Activated CD8-positive, alpha-beta T cell treated with anti-CD3 and anti-CD28 coated beads for 36 hours (primary cell): ENCODE measurements at regions of chr6 and their contacts with region 1.

Region 1: GRCh38 chr6:112180095-112180820 is 74.1 kb downstream of the LAMA4 start:
- DNase-seq: peak; percentile 56
- ATAC-seq: peak; percentile 83
- H3K4me3 Mint-ChIP-seq: no peak overlapping the region
- H3K27ac Mint-ChIP-seq: no peak overlapping the region
- H3K4me1 Mint-ChIP-seq: no peaks in the 10 kb centered on the region
- H3K27me3 Mint-ChIP-seq: peaks cover 14% of the 10 kb centered on the region
- CTCF ChIP-seq: peak; percentile 91

Region 2: GRCh38 chr6:111750753-111751684 is 429.2 kb before region 1 on chr6:
- CTCF ChIA-PET with region 1: no interaction called
- POLR2A ChIA-PET with region 1: no interaction called
- intact Hi-C with region 1: no loop called
- DNase-seq: peak; percentile 75
- ATAC-seq: peak; percentile 85
- H3K4me3 Mint-ChIP-seq: peak overlapping the region; percentile 35
- H3K27ac Mint-ChIP-seq: peak overlapping the region; percentile 96
- H3K4me1 Mint-ChIP-seq: peaks cover 93% of the 10 kb centered on the region
- H3K27me3 Mint-ChIP-seq: no peaks in the 10 kb centered on the region
- CTCF ChIP-seq: no peak

Region 3: DNA sequence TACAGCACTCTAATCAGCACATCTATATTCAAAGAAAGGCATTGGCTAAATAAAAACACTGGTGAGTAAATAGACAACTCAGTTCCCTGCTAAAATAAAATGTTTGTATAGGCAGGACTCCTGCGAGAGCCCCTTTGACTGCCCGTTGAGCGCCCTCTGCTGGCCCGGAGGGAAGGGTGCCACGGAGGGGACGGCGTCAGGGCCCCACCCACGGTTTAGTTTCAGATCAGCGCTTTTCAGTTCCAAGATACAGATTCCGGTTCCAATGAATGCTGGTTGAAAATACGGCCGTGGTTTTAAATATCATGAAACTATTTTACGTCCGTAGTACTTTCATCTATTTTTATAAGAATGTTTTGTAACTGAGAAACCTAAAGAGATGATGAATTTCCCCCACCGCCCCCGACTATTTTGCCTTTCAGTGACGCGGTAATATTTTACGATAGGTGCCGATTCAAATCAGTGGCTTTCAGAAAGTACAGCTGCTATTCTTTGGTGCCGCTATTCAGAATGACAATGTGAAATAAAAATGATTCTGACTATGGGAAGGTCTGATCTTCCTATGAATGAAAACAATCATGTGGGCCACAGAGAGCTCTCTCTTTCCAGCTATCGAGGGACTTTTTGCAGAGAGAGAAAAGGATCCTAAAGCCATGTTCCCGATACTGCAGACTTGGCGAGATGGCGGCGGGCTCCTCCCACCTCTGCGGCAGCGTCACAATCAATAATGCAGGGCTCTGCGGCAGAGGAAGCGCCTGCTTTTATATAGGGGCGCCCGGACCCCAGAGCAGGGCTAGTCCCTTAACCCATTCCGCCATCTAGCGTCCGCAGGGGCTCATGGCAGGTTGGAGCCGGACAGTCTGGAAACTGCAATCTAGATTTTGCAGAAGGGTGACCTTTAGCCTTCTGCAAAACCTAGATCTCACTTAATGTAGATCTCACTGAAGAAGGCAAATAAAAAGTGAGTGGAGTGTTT is 136.9 kb before region 1 on chr6:
- CTCF ChIA-PET with region 1: no interaction called
- POLR2A ChIA-PET with region 1: no interaction called
- intact Hi-C with region 1: no loop called
- DNase-seq: peak; percentile 97
- ATAC-seq: peak; percentile 92
- H3K4me3 Mint-ChIP-seq: peak overlapping the region; percentile 86
- H3K27ac Mint-ChIP-seq: peak overlapping the region; percentile 99
- H3K4me1 Mint-ChIP-seq: peaks cover 40% of the 10 kb centered on the region
- H3K27me3 Mint-ChIP-seq: no peaks in the 10 kb centered on the region
- CTCF ChIP-seq: peak; percentile 90

Region 4: DNA sequence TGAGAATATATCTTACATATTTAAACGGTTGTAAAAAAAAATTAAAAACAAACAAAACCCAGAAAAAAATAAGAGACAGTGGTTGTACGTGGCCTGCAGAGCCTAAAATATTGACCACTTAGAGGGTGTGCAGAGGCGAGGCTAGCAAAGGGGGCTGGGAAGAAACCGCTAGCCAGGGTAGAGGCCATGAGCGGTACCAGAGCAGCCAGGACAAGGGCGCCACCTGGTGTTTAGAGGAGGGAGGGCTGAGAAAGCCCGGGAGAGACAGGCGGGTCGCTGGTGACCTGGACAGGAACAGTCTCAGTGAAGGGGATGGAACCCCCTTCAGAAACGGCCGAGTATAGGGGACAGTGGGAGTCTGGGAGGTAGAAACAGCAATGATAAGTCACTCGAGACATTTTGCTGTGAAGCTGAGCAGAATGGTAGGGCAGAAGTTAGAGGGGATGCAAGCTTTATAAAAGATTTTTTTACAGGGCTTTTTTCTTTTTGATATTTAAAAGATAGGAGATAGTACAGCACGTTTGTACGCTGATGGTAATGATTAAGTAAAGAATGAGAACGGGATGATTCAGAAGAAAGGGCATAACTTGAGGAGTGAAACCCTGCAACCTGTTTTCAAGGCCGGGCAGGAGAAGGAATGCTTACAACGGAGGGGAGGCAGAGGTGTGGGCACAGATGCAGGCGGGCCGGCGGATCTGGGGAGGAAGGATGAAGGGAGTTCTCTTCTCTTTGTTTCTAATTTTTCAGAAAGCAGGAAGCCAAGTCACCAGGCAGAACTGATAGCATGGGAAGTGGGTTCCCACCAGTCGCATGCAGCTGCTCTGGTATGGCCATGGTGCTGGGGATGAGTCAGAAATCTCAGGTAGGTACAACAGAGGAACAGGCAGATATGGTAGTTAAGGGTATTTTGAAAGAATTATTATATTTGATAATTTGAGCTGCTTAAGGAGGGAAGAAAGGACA is 16.7 kb before region 1 on chr6:
- CTCF ChIA-PET with region 1: interaction called, 42 read pairs
- POLR2A ChIA-PET with region 1: interaction called, 3 read pairs
- intact Hi-C with region 1: no loop called
- DNase-seq: peak; percentile 90
- ATAC-seq: peak; percentile 98
- H3K4me3 Mint-ChIP-seq: peak overlapping the region; percentile 42
- H3K27ac Mint-ChIP-seq: no peak overlapping the region
- H3K4me1 Mint-ChIP-seq: peaks cover 12% of the 10 kb centered on the region
- H3K27me3 Mint-ChIP-seq: peaks cover 42% of the 10 kb centered on the region
- CTCF ChIP-seq: peak; percentile 97

Region 5: DNA sequence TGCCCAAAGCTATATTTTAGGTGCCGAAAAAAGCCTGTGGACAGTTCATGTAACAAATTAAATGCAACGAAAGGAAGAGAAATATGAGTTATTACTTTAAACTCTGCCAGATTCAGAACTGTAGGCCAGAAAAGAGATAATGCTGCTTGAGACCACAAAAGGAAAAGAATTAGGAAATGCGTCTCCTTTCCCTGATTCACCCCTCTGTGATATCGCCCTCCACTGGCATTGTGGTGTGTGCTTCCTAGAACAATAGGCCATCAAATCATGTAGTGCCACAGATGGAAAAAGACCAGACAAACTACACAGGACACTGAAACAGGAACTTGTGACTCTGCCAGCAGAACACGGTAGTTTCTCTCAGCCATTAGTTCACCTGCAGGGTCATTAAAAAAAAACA is 88.9 kb after region 1 on chr6:
- CTCF ChIA-PET with region 1: interaction called, 12 read pairs
- POLR2A ChIA-PET with region 1: no interaction called
- intact Hi-C with region 1: no loop called
- DNase-seq: no peak
- ATAC-seq: no peak
- H3K4me3 Mint-ChIP-seq: no peak overlapping the region
- H3K27ac Mint-ChIP-seq: no peak overlapping the region
- H3K4me1 Mint-ChIP-seq: peaks cover 3% of the 10 kb centered on the region
- H3K27me3 Mint-ChIP-seq: peaks cover 5% of the 10 kb centered on the region
- CTCF ChIP-seq: no peak

Region 6: DNA sequence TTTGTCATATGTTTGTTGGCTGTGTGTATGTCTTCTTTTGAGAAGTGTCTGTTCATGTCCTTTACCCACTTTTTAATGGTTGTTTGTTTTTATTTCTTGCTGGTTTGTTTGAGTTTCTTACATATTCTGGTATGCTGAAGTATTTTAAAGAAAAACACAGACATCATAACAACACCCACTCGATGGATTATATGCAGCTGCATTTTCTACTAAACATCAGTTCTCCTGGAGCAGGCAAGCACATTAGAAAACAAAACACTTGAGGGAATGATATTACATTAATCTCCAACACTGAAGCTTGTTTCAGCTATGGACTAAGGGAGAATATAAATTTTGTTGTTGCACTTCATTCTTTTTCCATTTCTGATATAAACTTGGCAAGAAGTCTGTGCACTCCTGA is 124.4 kb after region 1 on chr6:
- CTCF ChIA-PET with region 1: interaction called, 146 read pairs
- POLR2A ChIA-PET with region 1: no interaction called
- intact Hi-C with region 1: no loop called
- DNase-seq: no peak
- ATAC-seq: no peak
- H3K4me3 Mint-ChIP-seq: no peak overlapping the region
- H3K27ac Mint-ChIP-seq: no peak overlapping the region
- H3K4me1 Mint-ChIP-seq: peaks cover 5% of the 10 kb centered on the region
- H3K27me3 Mint-ChIP-seq: peaks cover 42% of the 10 kb centered on the region
- CTCF ChIP-seq: no peak

Region 7: DNA sequence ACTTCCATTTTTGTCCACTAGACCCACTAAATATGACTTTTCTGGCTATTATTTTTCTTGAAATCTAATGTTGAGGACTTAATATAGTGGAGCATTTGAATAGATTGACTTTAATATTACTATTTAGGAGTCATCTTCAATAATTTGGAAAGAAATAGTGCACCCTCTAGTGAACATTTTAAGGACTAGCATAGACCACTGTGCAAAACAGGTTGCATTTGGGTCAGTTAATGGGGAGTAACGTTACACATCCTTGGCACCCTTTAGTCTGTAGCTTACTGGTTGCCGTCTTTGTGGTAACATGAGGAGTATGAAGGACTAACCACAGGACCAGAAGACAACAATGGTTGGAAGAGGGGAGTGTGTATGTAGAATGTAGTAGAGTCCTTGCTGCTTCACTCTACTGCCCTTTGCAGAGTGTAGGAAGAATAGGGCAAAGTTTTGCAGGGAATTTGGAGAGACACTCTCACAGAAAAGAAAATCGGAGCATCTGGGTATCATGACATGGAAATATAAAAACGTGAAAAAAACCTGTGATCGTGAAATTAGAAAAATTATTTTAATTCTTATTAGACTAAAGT is 192.1 kb after region 1 on chr6:
- CTCF ChIA-PET with region 1: interaction called, 10 read pairs
- POLR2A ChIA-PET with region 1: no interaction called
- intact Hi-C with region 1: no loop called
- DNase-seq: no peak
- ATAC-seq: no peak
- H3K4me3 Mint-ChIP-seq: no peak overlapping the region
- H3K27ac Mint-ChIP-seq: no peak overlapping the region
- H3K4me1 Mint-ChIP-seq: no peaks in the 10 kb centered on the region
- H3K27me3 Mint-ChIP-seq: peaks cover 11% of the 10 kb centered on the region
- CTCF ChIP-seq: no peak